BJ (cell line): ENCODE measurements at regions of chr7 and their contacts with region 1.

Region 1: GRCh38 chr7:101602484-101603241 is 26.4 kb downstream of the MYL10 start:
- DNase-seq: no peak
- H3K4me3 ChIP-seq: no peak overlapping the region
- H3K27me3 ChIP-seq: no peaks in the 10 kb centered on the region
- CTCF ChIP-seq: peak; percentile 98

Region 2: GRCh38 chr7:101614939-101615302 is 12.3 kb after region 1 on chr7:
- CTCF ChIA-PET with region 1: interaction called, 30 read pairs
- POLR2A ChIA-PET with region 1: no interaction called
- DNase-seq: no peak
- H3K4me3 ChIP-seq: no peak overlapping the region
- H3K27me3 ChIP-seq: no peaks in the 10 kb centered on the region
- CTCF ChIP-seq: no peak

Region 3: GRCh38 chr7:101681170-101682007 is 78.7 kb after region 1 on chr7:
- CTCF ChIA-PET with region 1: interaction called, 22 read pairs
- POLR2A ChIA-PET with region 1: no interaction called
- DNase-seq: peak; percentile 68
- H3K4me3 ChIP-seq: no peak overlapping the region
- H3K27me3 ChIP-seq: no peaks in the 10 kb centered on the region
- CTCF ChIP-seq: no peak

Region 4: GRCh38 chr7:101815835-101816493 is 213.3 kb after region 1 on chr7:
- CTCF ChIA-PET with region 1: interaction called, 12 read pairs
- POLR2A ChIA-PET with region 1: no interaction called
- DNase-seq: no peak
- H3K4me3 ChIP-seq: peak overlapping the region; percentile 77
- H3K27me3 ChIP-seq: no peaks in the 10 kb centered on the region
- CTCF ChIP-seq: peak; percentile 8; the same call in 1 of the 2 replicates